CD4-positive, alpha-beta T cell (primary cell): ENCODE measurements at regions of chr7 and their contacts with region 1.

Region 1: GRCh38 chr7:140673063-140673773 is 473 bp downstream of the ADCK2 start:
- DNase-seq: peak; percentile 39 to 82 (median 59)
- ATAC-seq: peak; percentile 74
- H3K4me3 ChIP-seq: peak overlapping the region; percentile 63
- H3K4me3 Mint-ChIP-seq: peak overlapping the region; percentile 88
- H3K27ac ChIP-seq: peak overlapping the region; percentile 71 to 79
- H3K27ac Mint-ChIP-seq: peak overlapping the region; percentile 90
- H3K4me1 ChIP-seq: peaks cover 29% of the 10 kb centered on the region
- H3K4me1 Mint-ChIP-seq: peaks cover 32% of the 10 kb centered on the region
- H3K27me3 ChIP-seq: no peaks in the 10 kb centered on the region
- H3K27me3 Mint-ChIP-seq: no peaks in the 10 kb centered on the region
- CTCF ChIP-seq: no peak

Region 2: DNA sequence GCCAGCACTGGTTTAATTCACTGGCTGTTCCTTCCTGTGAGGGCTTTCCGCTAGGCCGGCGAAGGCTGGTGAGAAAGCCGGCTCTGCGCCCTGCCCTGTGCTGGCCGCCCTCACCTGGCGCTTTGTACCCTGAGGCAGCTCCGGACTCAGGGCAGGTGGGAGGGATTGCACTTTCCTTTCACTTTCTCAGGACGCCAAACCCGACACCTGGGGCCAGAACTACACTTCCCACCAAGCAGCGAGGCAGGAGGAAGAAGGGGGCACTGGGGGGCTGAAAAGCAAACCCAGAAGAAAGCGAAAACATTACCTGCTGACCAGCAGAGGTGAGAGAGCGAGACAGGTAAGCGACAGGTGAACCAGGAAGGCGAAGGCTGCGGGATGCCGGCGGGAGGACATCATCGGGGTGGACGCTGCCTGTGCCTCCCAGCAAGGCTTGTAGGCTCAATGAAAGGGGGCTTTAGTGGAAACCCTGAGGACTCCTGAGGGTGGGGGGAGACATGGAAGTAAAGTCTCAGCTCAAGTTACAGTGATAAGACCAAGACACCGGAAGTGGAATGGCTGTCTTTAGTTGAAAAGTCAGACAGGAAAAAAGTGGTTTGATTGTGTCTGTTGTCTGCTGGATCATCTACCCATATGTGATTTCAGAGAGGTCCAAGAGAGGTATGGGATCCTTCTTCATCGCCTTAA is 269.2 kb before region 1 on chr7 and contains the start of gene RAB19:
- CTCF ChIA-PET with region 1: no interaction called
- POLR2A ChIA-PET with region 1: no interaction called
- intact Hi-C with region 1: loop called in 1 of 2 experiments (anchors 5 kb)
- DNase-seq: peak; percentile 20 to 77 (median 45)
- ATAC-seq: peak; percentile 86
- H3K4me3 ChIP-seq: peak within 1 kb of the TSS; percentile 86
- H3K4me3 Mint-ChIP-seq: peak within 1 kb of the TSS; percentile 96
- H3K27ac ChIP-seq: peak within 1 kb of the TSS; percentile 79 to 80
- H3K27ac Mint-ChIP-seq: peak within 1 kb of the TSS; percentile 97
- H3K4me1 ChIP-seq: peaks cover 20% of the 10 kb centered on the region
- H3K4me1 Mint-ChIP-seq: peaks cover 25% of the 10 kb centered on the region
- H3K27me3 ChIP-seq: no peaks in the 10 kb centered on the region
- H3K27me3 Mint-ChIP-seq: no peaks in the 10 kb centered on the region
- CTCF ChIP-seq: no peak
- total RNA-seq, gene RAB19: 1.6 to 2.8 TPM

Region 3: DNA sequence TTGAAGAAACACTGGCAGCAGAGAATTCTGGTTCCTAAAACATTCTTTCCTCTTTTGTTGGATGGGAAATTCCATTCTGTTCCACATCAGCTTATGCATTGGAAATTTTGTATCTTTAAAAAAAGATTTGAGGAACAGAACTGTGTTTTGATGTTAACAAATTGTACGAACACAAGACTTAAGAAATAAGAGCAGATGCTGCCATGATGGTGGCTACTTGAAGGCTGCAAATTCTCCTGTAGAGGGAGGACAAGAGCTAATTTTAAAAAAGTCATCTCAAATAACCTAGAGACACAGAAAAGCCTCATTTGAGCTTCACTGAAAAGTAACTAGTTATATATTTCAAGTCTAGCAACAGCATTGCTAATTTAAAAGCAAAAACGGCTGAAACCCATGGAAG is 53.1 kb after region 1 on chr7:
- CTCF ChIA-PET with region 1: no interaction called
- POLR2A ChIA-PET with region 1: interaction called, 20 read pairs
- intact Hi-C with region 1: no loop called
- DNase-seq: peak in 3 of 14 experiments; percentile 16 to 20 (median 16)
- ATAC-seq: no peak
- H3K4me3 ChIP-seq: no peak overlapping the region
- H3K4me3 Mint-ChIP-seq: no peak overlapping the region
- H3K27ac ChIP-seq: no peak overlapping the region
- H3K27ac Mint-ChIP-seq: peak overlapping the region; percentile 48
- H3K4me1 ChIP-seq: peaks cover 3% of the 10 kb centered on the region
- H3K4me1 Mint-ChIP-seq: peaks cover 19% of the 10 kb centered on the region
- H3K27me3 ChIP-seq: no peaks in the 10 kb centered on the region
- H3K27me3 Mint-ChIP-seq: no peaks in the 10 kb centered on the region
- CTCF ChIP-seq: no peak